Activated T-helper 1 cell treated with anti-CD3 and anti-CD28 coated beads, Interleukin-12 subunit alpha, Interleukin-12 subunit beta, Interleukin-2, Interleukin-4 antibody, amounts not matched to agents 30 ng/mL and 10 ng/mL and 1 ng/mL, durations not matched to agents 14 hours and 24 hours and 36 hours (primary cell): ENCODE measurements at regions of chr13 and their contacts with region 1.

Region 1: GRCh38 chr13:94239135-94239534 is 240.3 kb downstream of the DCT start:
- DNase-seq: no peak
- H3K4me3 Mint-ChIP-seq: peak overlapping the region; percentile 20
- H3K27ac Mint-ChIP-seq: peak overlapping the region; percentile 35
- H3K4me1 Mint-ChIP-seq: peaks cover 36% of the 10 kb centered on the region
- H3K27me3 Mint-ChIP-seq: peaks cover 8% of the 10 kb centered on the region

Region 2: GRCh38 chr13:93794197-93794885 is 444.8 kb before region 1 on chr13:
- intact Hi-C with region 1: loop called (anchors 1 kb)
- DNase-seq: peak; percentile 5
- H3K4me3 Mint-ChIP-seq: no peak overlapping the region
- H3K27ac Mint-ChIP-seq: peak overlapping the region; percentile 59
- H3K4me1 Mint-ChIP-seq: peaks cover 10% of the 10 kb centered on the region
- H3K27me3 Mint-ChIP-seq: peaks cover 5% of the 10 kb centered on the region

Region 3: GRCh38 chr13:94210816-94211215 is 28.3 kb before region 1 on chr13:
- intact Hi-C with region 1: loop called (anchors 1 kb)
- DNase-seq: no peak
- H3K4me3 Mint-ChIP-seq: no peak overlapping the region
- H3K27ac Mint-ChIP-seq: no peak overlapping the region
- H3K4me1 Mint-ChIP-seq: no peaks in the 10 kb centered on the region
- H3K27me3 Mint-ChIP-seq: no peaks in the 10 kb centered on the region

Region 4: GRCh38 chr13:94317063-94317491 is 77.9 kb after region 1 on chr13:
- intact Hi-C with region 1: loop called (anchors 5 kb)
- DNase-seq: peak; percentile 13
- H3K4me3 Mint-ChIP-seq: peak overlapping the region; percentile 44
- H3K27ac Mint-ChIP-seq: peak overlapping the region; percentile 86
- H3K4me1 Mint-ChIP-seq: peaks cover 80% of the 10 kb centered on the region
- H3K27me3 Mint-ChIP-seq: no peaks in the 10 kb centered on the region

Region 5: GRCh38 chr13:94351292-94351990 is 112.3 kb after region 1 on chr13:
- intact Hi-C with region 1: loop called (anchors 1 kb)
- DNase-seq: no peak
- H3K4me3 Mint-ChIP-seq: no peak overlapping the region
- H3K27ac Mint-ChIP-seq: peak overlapping the region; percentile 57
- H3K4me1 Mint-ChIP-seq: peaks cover 23% of the 10 kb centered on the region
- H3K27me3 Mint-ChIP-seq: peaks cover 3% of the 10 kb centered on the region